MCF 10A (cell line): ENCODE measurements at regions of chr10 and their contacts with region 1.

Region 1: DNA sequence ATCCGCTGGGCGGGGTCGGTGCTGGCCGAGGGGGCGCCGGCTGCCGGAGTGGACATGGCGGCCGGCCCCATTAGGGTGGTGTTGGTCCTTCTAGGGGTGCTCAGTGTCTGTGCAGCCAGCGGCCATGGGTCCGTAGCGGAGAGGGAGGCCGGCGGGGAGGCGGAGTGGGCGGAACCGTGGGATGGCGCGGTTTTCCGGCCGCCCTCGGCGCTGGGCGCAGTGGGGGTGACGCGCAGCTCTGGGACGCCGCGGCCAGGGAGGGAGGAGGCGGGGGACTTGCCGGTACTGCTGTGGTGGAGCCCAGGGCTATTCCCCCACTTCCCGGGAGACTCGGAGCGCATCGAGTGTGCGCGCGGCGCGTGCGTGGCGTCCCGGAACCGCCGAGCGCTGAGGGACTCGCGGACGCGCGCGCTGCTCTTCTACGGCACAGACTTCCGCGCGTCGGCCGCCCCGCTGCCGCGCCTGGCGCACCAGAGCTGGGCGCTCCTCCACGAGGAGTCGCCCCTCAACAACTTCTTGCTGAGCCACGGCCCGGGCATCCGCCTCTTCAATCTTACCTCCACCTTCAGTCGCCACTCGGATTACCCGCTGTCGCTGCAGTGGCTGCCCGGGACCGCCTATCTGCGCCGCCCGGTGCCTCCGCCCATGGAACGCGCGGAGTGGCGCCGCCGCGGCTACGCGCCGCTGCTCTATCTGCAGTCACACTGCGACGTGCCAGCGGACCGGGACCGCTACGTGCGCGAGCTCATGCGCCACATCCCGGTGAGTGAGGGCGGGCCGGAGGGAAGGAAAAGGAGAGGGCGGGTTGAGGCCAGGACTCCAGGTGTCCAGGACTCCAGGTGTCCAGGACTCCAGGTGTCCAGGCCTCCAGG is 9.3 kb upstream of the CHCHD1 start:
- DNase-seq: peak; percentile 73
- H3K4me3 Mint-ChIP-seq: peak overlapping the region; percentile 92
- H3K27ac Mint-ChIP-seq: peak overlapping the region; percentile 79
- H3K4me1 Mint-ChIP-seq: peaks cover 31% of the 10 kb centered on the region
- H3K27me3 Mint-ChIP-seq: no peaks in the 10 kb centered on the region
- CTCF ChIP-seq: no peak

Region 2: GRCh38 chr10:73759512-73760115 is 12.9 kb before region 1 on chr10:
- CTCF ChIA-PET with region 1: interaction called, 3 read pairs
- POLR2A ChIA-PET with region 1: interaction called, 28 read pairs
- intact Hi-C with region 1: no loop called
- DNase-seq: no peak
- H3K4me3 Mint-ChIP-seq: no peak overlapping the region
- H3K27ac Mint-ChIP-seq: no peak overlapping the region
- H3K4me1 Mint-ChIP-seq: peaks cover 23% of the 10 kb centered on the region
- H3K27me3 Mint-ChIP-seq: no peaks in the 10 kb centered on the region
- CTCF ChIP-seq: no peak

Region 3: DNA sequence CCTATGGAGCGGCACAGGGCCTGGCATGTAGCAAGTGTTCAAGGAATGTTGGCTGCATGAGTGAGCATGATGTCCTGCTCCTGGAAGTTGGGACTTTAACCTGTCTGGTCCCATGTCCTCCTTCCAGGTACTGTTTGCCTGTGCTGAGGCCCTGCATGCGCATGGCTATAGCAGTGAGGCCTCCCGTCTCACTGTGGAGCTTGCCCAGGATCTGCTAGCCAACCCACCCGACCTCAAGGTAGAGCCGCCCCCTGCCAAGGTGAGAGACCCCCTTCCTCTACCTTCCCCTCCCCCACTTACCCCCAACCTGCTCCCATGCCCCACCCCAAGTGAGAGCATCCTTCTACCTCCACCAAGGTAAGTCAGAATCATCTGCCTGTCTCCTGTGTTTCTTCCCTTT is 20.9 kb after region 1 on chr10:
- CTCF ChIA-PET with region 1: no interaction called
- POLR2A ChIA-PET with region 1: no interaction called
- intact Hi-C with region 1: no loop called
- DNase-seq: no peak
- H3K4me3 Mint-ChIP-seq: no peak overlapping the region
- H3K27ac Mint-ChIP-seq: no peak overlapping the region
- H3K4me1 Mint-ChIP-seq: no peaks in the 10 kb centered on the region
- H3K27me3 Mint-ChIP-seq: no peaks in the 10 kb centered on the region
- CTCF ChIP-seq: no peak

Region 4: DNA sequence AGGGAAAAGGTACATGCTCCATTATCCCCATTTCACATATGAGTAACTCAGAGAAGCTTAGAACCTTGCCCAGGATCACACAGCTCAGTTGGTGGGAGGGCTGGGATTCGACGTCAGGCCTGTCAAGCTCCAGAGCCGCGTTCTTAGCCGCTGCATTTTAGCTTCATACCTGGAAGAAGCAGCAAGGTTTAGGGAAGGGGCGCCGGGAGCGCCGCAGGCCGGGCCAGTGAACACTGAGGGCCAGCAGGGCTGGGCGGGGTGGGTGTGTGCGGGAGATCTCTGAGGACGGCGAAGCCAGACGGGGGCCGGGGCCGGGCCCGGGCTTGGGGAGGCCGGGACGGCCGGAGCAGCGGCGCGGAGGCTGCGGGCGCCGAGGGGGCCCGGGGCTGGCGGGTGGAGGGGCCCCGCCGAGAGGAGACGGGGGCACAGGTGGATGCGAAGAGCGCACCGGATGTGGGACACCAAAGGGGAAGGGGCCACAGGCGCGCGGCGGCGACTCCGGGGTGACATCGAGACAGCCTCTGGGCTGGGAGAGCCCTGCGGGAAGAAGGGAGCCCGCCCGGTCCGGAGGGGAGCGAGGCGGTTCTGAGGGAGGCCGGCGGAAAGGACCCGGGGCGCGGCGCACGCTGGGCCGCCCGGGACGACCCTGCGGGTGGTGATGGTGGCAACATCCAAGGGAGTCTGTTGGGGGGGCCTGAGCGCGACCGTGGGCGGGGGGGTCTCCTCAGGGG is 38.4 kb after region 1 on chr10:
- CTCF ChIA-PET with region 1: no interaction called
- POLR2A ChIA-PET with region 1: interaction called, 14 read pairs
- intact Hi-C with region 1: no loop called
- DNase-seq: no peak
- H3K4me3 Mint-ChIP-seq: peak overlapping the region; percentile 72
- H3K27ac Mint-ChIP-seq: peak overlapping the region; percentile 19
- H3K4me1 Mint-ChIP-seq: peaks cover 14% of the 10 kb centered on the region
- H3K27me3 Mint-ChIP-seq: no peaks in the 10 kb centered on the region
- CTCF ChIP-seq: no peak

Region 5: GRCh38 chr10:73908853-73909538 is 136.5 kb after region 1 on chr10:
- CTCF ChIA-PET with region 1: no interaction called
- POLR2A ChIA-PET with region 1: no interaction called
- intact Hi-C with region 1: no loop called
- DNase-seq: peak; percentile 97
- H3K4me3 Mint-ChIP-seq: no peak overlapping the region
- H3K27ac Mint-ChIP-seq: peak overlapping the region; percentile 70
- H3K4me1 Mint-ChIP-seq: peaks cover 62% of the 10 kb centered on the region
- H3K27me3 Mint-ChIP-seq: no peaks in the 10 kb centered on the region
- CTCF ChIP-seq: no peak

Region 6: DNA sequence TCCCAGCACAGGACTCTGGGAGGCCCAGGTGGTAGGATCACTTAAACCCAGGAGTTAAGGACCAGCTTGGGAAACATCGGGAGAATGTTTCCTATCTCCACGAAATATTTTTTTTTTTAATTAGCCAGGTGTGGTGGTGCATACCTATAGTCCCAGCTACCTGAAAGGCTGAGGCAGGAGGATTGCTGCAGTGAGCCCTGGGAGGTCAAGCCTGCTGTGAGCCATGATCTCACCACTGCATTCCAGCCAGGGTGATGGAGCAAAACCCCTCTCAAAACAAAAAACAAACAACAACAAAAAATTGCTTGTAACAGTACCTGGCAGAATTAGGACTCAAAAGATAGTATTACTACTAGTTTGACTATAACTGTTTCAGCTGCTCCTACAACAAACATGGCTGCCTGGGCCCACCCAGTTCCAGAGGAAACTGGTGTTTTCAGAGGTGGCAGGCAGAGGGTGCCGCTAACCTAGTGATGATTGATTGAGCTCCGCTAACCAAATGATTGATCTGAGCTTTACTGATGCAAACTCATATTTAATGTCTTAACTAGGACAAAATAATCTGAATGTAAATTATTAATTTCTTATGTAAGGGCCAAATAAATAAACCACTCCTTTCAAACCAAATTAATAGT is 321.1 kb after region 1 on chr10:
- CTCF ChIA-PET with region 1: no interaction called
- POLR2A ChIA-PET with region 1: no interaction called
- intact Hi-C with region 1: no loop called
- DNase-seq: no peak
- H3K4me3 Mint-ChIP-seq: no peak overlapping the region
- H3K27ac Mint-ChIP-seq: no peak overlapping the region
- H3K4me1 Mint-ChIP-seq: no peaks in the 10 kb centered on the region
- H3K27me3 Mint-ChIP-seq: no peaks in the 10 kb centered on the region
- CTCF ChIP-seq: no peak